IMR-90 (cell line): ENCODE measurements at regions of chr21 and their contacts with region 1.

Region 1: GRCh38 chr21:17146431-17146830 is 366.4 kb upstream of the CXADR start:
- DNase-seq: no peak
- ATAC-seq: no peak
- H3K4me3 ChIP-seq: no peak overlapping the region
- H3K27ac ChIP-seq: no peak overlapping the region
- H3K4me1 ChIP-seq: no peaks in the 10 kb centered on the region
- H3K27me3 ChIP-seq: no peaks in the 10 kb centered on the region
- CTCF ChIP-seq: no peak
- POLR2A ChIP-seq: no peak
- RAD21 ChIP-seq: no peak

Region 2: DNA sequence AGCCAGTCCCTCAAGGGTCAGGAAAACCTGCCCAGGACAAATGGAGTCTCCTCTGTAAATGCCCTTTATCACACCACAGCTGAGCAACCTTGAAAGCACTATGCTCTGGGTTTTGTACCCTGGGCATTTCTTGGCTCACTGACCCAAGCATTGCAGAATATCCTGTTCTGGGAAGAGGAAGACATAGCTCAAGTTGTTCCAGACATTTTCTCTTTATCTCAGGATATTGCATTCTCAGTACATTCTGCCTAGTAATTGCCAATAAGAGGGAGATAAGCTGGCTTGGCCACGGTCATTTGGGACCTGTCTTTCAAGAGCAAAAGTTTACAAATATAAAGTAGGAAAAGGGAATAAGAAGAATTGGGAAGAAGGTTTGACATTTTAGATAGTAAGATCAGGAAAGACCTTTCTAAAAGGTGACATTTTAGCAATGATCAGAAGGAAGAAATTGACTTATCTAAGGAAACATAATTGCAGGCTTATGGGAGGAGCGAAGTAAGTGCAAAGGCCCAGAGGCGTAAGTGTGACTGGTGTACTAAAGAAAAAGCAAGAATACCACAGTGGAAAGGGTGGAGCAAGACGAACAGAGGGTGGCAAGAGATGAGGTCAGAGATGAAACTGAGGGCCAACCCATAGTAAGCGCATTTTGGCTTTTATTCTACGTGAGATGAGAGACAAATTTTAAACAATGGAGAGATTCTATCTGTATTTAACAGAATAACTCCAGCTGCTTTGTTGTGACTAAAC is 27.6 kb before region 1 on chr21:
- CTCF ChIA-PET with region 1: no interaction called
- POLR2A ChIA-PET with region 1: no interaction called
- dilution Hi-C with region 1: no loop called
- in situ Hi-C with region 1: no loop called
- intact Hi-C with region 1: loop called (anchors 2 kb)
- DNase-seq: no peak
- ATAC-seq: no peak
- H3K4me3 ChIP-seq: no peak overlapping the region
- H3K27ac ChIP-seq: no peak overlapping the region
- H3K4me1 ChIP-seq: no peaks in the 10 kb centered on the region
- H3K27me3 ChIP-seq: no peaks in the 10 kb centered on the region
- CTCF ChIP-seq: no peak
- POLR2A ChIP-seq: no peak
- RAD21 ChIP-seq: no peak